Sigmoid colon (tissue), 7 donors: ENCODE measurements at regions of chr1 and their contacts with region 1.

Region 1: DNA sequence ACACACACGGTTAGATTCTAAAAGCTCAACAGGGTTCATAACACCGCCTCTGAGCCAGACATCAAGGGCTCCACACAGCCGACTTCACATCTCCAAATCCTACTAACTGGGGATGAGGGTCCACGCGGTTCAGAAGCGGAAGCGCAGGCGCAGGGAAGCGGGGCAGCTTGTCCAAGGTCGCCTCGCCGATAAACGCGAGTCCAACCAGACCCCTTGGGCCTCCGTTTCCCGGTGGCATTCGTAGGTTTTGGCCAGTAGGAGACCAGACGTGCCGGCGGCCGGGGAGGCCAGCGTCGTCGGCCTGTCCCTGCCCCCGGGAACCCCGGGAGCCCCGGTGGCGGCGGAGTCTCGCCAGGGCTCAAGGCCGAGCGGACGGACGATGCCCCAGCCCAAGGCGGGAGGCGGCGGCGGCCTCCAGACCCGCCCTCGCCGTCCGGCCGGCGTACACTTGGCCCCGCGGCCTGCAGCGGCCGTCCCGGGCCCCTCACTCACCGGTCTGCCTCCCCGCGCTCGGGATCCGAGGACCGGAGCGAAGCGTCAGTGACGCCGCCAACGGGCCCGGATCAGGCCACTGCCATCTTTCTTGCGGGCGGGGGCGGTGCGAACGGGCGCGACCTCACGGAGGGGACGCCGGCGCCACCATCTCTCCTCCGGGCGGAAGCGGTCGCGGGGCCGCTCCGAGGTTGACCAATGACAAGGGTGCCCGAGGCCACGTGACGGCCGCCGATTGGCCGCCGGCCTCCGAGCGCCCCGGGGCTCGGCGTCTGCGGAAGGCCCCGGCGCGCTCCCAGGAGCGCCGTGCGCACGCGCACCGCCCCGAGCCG is at the start of gene SDF4:
- DNase-seq: peak; percentile 98
- H3K4me3 ChIP-seq: peak within 1 kb of the TSS; percentile 69 to 100 (median 96)
- H3K27ac ChIP-seq: peak within 1 kb of the TSS; percentile 92 to 97 (median 96)
- H3K4me1 ChIP-seq: peaks cover 0 to 50% (median 33%) of the 10 kb centered on the region in 4 donors
- H3K27me3 ChIP-seq: no peaks in the 10 kb centered on the region
- CTCF ChIP-seq: no peak
- EP300 ChIP-seq: no peak
- POLR2A ChIP-seq: peak; percentile 18 to 47
- total RNA-seq, gene SDF4: 73.4 to 95.6 (median 81.9) TPM

Region 2: DNA sequence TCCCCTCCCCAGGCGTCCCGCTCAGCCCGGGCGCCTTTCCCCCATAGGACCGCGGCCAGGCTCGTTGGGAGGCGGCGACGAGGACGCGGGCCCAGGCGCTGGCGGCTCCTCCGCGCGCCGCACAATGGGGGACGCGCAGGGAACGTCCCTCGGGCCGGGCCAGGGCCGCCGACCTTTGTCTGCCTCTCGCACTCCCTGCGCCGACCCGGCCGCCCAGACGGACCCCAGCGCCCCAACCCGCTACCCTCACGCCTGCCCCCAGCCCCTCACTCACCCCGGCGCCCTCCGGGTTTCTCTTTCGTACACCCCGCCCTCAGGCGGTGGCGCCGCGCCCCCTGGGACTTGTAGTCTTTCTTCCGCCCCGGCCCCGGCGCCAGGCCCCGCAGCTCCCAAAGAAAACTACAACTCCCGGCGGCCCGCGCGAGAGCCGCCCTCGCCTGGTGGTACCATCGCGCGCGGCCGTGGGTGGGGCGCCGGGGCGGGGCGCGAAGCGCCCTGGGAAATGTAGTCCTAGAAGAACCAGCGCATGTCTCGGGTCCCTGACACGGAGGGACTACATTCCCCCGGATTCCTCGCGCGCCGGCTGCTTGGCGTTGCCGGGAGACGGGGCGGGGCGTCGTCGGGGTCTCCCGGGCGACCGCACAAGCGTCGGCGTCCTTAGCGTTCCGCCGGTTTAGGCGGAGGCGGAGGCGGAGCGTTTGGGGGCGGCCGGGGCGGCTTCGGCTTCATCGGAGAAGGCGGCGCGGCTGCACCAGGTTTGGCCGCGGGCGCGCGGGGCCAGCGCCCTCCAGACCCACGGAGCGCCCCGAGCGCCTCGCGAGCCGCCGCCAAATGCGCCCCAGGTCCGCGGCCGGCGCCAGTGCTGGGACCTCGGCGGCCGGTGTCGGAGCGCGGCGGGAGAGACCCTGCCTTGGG is 115.6 kb before region 1 on chr1 and contains the start of gene C1orf159:
- intact Hi-C with region 1: loop called (anchors 2 kb)
- DNase-seq: peak; percentile 99
- H3K4me3 ChIP-seq: peak within 1 kb of the TSS; percentile 69 to 99 (median 93)
- H3K27ac ChIP-seq: peak within 1 kb of the TSS; percentile 74 to 87 (median 82)
- H3K4me1 ChIP-seq: peaks cover 0 to 19% (median 15%) of the 10 kb centered on the region in 4 donors
- H3K27me3 ChIP-seq: peaks cover 0 to 18% (median 0%) of the 10 kb centered on the region in 3 donors
- CTCF ChIP-seq: no peak
- EP300 ChIP-seq: no peak
- POLR2A ChIP-seq: no peak
- total RNA-seq, gene C1orf159: 7.9 to 13.8 (median 10.4) TPM

Region 3: GRCh38 chr1:1273512-1274298 is 42.1 kb after region 1 on chr1 and contains the start of gene UBE2J2:
- intact Hi-C with region 1: loop called (anchors 1 kb)
- DNase-seq: peak; percentile 97
- H3K4me3 ChIP-seq: peak within 1 kb of the TSS; percentile 81 to 99 (median 88)
- H3K27ac ChIP-seq: peak within 1 kb of the TSS; percentile 88 to 95 (median 89)
- H3K4me1 ChIP-seq: peaks cover 0 to 50% (median 44%) of the 10 kb centered on the region in 4 donors
- H3K27me3 ChIP-seq: no peaks in the 10 kb centered on the region
- CTCF ChIP-seq: no peak
- EP300 ChIP-seq: no peak
- POLR2A ChIP-seq: no peak
- total RNA-seq, gene UBE2J2: 33.1 to 44.3 (median 34.0) TPM

Region 4: DNA sequence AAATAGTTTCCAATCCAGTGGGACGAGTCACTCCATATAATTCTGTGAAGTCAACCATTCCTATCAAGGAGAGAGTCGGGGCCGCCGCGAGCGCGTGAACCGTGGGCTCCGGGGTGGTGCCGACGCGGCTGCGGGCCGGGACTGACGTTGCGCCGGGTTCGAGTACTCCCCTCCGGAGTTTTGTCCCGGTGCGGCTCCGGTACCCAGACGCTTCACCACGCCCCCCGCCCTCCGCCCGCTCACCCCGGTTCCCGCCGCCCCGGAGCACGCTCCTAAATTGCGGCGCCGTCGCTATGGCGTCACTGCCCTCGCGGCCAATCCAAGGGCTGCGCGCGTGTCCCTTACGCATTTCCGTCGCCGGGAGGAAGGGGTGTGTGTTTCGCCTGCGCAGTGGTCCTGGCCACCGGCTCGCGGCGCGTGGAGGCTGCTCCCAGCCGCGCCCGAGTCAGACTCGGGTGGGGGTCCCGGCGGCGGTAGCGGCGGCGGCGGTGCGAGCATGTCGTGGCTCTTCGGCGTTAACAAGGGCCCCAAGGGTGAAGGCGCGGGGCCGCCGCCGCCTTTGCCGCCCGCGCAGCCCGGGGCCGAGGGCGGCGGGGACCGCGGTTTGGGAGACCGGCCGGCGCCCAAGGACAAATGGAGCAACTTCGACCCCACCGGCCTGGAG is 239.9 kb after region 1 on chr1 and contains the start of gene ATAD3B:
- intact Hi-C with region 1: no loop called
- DNase-seq: peak; percentile 97
- H3K4me3 ChIP-seq: peak within 1 kb of the TSS; percentile 62 to 94 (median 80)
- H3K27ac ChIP-seq: peak within 1 kb of the TSS; percentile 74 to 88 (median 85)
- H3K4me1 ChIP-seq: peaks cover 0 to 24% (median 20%) of the 10 kb centered on the region in 4 donors
- H3K27me3 ChIP-seq: no peaks in the 10 kb centered on the region
- CTCF ChIP-seq: no peak
- EP300 ChIP-seq: peak in 1 of 4 donors; percentile 69
- POLR2A ChIP-seq: peak in 1 of 2 donors; percentile 34
- total RNA-seq, gene ATAD3B: 11.1 to 47.1 (median 13.1) TPM